A549 (cell line): ENCODE measurements at regions of chr2 and their contacts with region 1.

Region 1: DNA sequence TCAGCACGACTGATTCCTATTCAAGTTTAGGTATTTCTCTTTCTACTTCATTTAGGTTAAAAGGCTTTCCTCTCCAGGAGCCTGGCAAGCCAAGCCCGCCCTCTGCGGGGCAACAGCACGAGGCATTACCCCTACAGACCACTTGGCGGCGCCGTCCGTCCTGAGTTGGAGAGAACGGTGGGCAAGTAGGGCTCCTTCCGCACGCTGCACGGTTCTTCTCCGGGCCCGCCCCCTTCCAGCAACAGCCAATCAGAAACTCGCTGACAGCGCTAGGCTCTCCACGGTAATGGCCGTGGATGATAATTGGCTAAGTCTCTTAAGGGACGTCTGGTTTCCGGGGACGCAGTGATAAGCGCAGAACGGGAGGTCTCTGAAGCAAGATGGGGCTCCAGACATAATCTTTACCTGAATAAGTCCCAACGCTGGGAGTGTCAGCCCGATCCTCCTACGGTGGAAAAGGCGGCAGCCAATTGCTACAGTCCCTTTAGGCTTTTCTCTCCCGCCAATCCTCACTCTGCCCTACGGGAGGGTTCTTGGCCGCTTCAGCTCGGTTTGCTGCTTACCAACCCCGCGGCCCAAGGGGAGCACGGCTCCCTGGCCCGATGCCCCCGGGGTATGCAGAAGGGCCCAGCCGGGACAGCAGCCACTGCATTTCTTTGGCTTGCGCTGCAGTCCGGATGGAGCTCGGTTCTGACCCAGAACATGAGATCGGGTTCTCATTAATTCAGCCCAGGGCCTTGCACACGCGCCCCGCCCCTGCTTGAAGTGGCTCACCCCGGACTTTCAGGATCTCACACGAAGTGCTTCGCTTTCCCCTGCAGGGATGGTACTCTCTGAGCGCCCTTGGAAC is 206.9 kb upstream of the PKDCC start:
- DNase-seq: peak; percentile 97 to 99
- ATAC-seq: peak; percentile 98 to 100
- H3K4me3 ChIP-seq: peak overlapping the region; percentile 67
- H3K27ac ChIP-seq: peak overlapping the region; percentile 86 to 95
- H3K4me1 ChIP-seq: peaks cover 11% of the 10 kb centered on the region
- CTCF ChIP-seq: peak; percentile 99
- EP300 ChIP-seq: no peak
- POLR2A ChIP-seq: peak; percentile 77
- RAD21 ChIP-seq: peak; percentile 97 to 98

Region 2: DNA sequence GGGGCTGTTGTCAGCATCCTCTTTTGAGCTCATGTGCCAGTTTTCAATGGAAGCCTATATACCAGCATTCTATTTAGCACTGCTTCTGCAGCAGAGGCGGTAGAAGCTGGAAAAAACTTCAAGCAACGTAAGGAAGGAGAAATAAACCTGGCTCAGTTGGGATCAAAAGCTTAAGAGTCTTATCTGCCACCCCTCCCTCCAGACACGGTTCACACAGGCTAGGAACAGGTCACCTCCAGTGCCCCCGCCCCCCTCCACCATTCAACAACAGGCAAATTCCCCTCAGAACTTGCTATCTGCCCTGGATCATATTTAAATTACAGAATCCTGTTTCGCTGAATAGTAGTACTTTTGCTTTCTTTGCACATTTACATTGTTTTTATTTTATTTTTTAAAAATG is 177.9 kb before region 1 on chr2:
- CTCF ChIA-PET with region 1: no interaction called
- POLR2A ChIA-PET with region 1: no interaction called
- DNase-seq: no peak
- ATAC-seq: no peak
- H3K4me3 ChIP-seq: no peak overlapping the region
- H3K27ac ChIP-seq: no peak overlapping the region
- H3K4me1 ChIP-seq: no peaks in the 10 kb centered on the region
- CTCF ChIP-seq: no peak
- EP300 ChIP-seq: no peak
- POLR2A ChIP-seq: no peak
- RAD21 ChIP-seq: no peak

Region 3: DNA sequence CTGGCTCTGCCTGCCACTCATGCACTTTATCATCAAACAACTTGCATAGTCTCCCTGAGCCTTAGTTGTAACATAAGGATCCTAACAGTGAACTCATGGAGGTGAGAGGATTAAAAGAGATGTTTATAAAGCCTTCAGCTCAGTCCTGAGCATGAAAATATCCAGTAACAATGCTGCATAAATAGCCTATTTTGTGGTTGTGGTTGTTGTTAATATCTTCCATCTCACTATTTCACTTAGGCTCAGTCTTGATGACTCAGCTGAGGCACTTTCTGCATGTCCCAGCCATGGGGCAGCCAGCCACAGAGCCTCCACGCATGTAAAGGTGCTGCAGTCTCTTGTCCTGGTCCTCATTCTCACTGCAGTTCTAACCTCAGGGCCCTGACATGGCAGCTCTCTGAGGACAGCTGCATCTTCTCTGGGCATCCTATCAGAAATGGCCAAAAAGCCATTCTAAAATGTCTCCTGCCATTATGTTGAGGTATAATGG is 11.9 kb before region 1 on chr2:
- CTCF ChIA-PET with region 1: interaction called, 19 read pairs
- POLR2A ChIA-PET with region 1: no interaction called
- DNase-seq: no peak
- ATAC-seq: peak; percentile 16 to 17; a peak in 3 of 6 replicates
- H3K4me3 ChIP-seq: no peak overlapping the region
- H3K27ac ChIP-seq: peak overlapping the region; percentile 78 to 79
- H3K4me1 ChIP-seq: peaks cover 35% of the 10 kb centered on the region
- CTCF ChIP-seq: no peak
- EP300 ChIP-seq: no peak
- POLR2A ChIP-seq: no peak
- RAD21 ChIP-seq: no peak